Activated CD4-positive, alpha-beta T cell treated with anti-CD3 and anti-CD28 coated beads for 36 hours (primary cell): ENCODE measurements at regions of chr2 and their contacts with region 1.

Region 1: DNA sequence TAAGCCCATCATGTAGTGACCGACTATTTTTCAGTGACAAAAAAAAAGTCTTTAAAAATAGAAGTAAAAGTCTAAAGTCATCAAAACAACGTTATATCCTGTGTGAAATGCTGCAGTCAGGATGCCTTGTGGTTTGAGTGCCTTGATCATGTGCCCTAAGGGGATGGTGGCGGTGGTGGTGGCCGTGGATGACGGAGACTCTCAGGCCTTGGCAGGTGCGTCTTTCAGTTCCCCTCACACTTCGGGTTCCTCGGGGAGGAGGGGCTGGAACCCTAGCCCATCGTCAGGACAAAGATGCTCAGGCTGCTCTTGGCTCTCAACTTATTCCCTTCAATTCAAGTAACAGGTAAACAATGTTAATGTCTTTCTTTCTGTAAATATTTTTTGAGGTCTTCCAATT is at the start of gene CD28:
- DNase-seq: peak; percentile 95
- ATAC-seq: peak; percentile 75
- H3K4me3 Mint-ChIP-seq: peak within 1 kb of the TSS; percentile 84
- H3K27ac Mint-ChIP-seq: peak within 1 kb of the TSS; percentile 100
- H3K4me1 Mint-ChIP-seq: peaks cover 44% of the 10 kb centered on the region
- H3K27me3 Mint-ChIP-seq: no peaks in the 10 kb centered on the region
- total RNA-seq, gene CD28: 175 TPM

Region 2: GRCh38 chr2:203327901-203328759 is 378.3 kb before region 1 on chr2 and contains the start of gene ABI2:
- CTCF ChIA-PET with region 1: interaction called, 5 read pairs
- POLR2A ChIA-PET with region 1: no interaction called
- intact Hi-C with region 1: loop called in 1 of 2 experiments (anchors 5 kb)
- DNase-seq: peak; percentile 77
- ATAC-seq: peak; percentile 52
- H3K4me3 Mint-ChIP-seq: peak within 1 kb of the TSS; percentile 91
- H3K27ac Mint-ChIP-seq: peak within 1 kb of the TSS; percentile 84
- H3K4me1 Mint-ChIP-seq: peaks cover 31% of the 10 kb centered on the region
- H3K27me3 Mint-ChIP-seq: no peaks in the 10 kb centered on the region
- total RNA-seq, gene ABI2: 40.6 to 57.6 TPM

Region 3: GRCh38 chr2:203535078-203535783 is 171.2 kb before region 1 on chr2 and contains the start of gene RAPH1:
- CTCF ChIA-PET with region 1: no interaction called
- POLR2A ChIA-PET with region 1: interaction called, 6 read pairs
- intact Hi-C with region 1: loop called (anchors 1 to 2 kb)
- DNase-seq: peak; percentile 85
- ATAC-seq: peak; percentile 77
- H3K4me3 Mint-ChIP-seq: peak within 1 kb of the TSS; percentile 74
- H3K27ac Mint-ChIP-seq: peak within 1 kb of the TSS; percentile 56
- H3K4me1 Mint-ChIP-seq: peaks cover 30% of the 10 kb centered on the region
- H3K27me3 Mint-ChIP-seq: peaks cover 9% of the 10 kb centered on the region
- total RNA-seq, gene RAPH1: 8.5 to 9.9 TPM

Region 4: DNA sequence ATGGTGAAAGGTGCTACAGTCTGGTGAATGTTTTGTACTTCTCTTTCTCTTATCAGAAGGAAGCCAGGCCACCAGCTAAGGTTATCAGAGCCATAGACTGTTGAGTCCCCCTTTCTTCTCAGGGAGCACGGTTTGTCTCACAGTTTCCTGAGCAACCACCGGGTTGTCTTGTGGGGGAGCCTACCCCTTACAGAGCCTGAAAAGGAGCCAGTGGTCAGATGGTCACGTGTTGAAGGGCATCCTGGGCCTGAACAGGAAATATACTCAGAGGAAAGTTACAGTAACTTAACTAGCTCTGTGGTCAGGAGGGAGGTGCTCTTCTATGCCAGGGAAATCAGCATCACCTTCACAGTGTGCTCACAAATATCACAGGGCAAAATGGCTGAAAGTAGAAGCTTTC is 11.7 kb after region 1 on chr2:
- CTCF ChIA-PET with region 1: interaction called, 27 read pairs
- POLR2A ChIA-PET with region 1: interaction called, 46 read pairs
- intact Hi-C with region 1: loop called (anchors 1 kb)
- DNase-seq: peak; percentile 77
- ATAC-seq: peak; percentile 63
- H3K4me3 Mint-ChIP-seq: peak overlapping the region; percentile 63
- H3K27ac Mint-ChIP-seq: peak overlapping the region; percentile 95
- H3K4me1 Mint-ChIP-seq: peaks cover 97% of the 10 kb centered on the region
- H3K27me3 Mint-ChIP-seq: no peaks in the 10 kb centered on the region

Region 5: GRCh38 chr2:203759690-203760365 is 53.4 kb after region 1 on chr2:
- CTCF ChIA-PET with region 1: no interaction called
- POLR2A ChIA-PET with region 1: interaction called, 4 read pairs
- intact Hi-C with region 1: loop called (anchors 1 kb)
- DNase-seq: no peak
- ATAC-seq: no peak
- H3K4me3 Mint-ChIP-seq: no peak overlapping the region
- H3K27ac Mint-ChIP-seq: no peak overlapping the region
- H3K4me1 Mint-ChIP-seq: peaks cover 61% of the 10 kb centered on the region
- H3K27me3 Mint-ChIP-seq: no peaks in the 10 kb centered on the region

Region 6: DNA sequence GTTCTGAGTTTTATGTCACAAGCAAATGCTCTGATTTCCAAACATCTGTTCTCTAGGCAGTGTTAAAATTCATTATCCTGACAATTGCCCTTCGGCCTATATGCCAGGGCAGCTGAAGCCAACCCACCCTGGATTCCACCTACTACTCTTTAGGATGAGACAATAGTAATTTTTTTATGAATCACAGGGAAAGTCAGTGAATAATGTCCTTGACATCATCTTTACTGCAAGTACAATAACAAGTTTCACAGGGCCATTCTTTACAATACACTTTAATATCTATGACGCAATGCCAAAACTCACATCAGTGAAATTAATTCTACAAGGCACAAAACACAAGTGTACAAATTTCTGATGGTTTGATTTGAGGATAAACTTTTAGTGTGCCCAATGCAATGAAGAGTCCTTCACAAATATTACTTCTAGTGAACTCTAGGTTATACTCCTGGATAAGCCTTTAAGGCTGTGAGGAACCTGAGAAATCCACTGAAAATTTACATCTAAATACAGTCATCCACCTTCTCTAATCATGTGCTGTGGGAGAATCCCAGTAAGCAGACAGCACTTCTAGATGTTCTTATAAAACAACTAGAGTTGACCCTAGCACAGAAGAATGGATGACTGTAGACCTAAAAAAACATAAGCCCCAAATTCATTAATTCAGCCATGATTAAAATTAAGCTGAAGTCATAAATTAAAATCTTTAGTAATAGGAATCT is 83.9 kb after region 1 on chr2:
- CTCF ChIA-PET with region 1: no interaction called
- POLR2A ChIA-PET with region 1: no interaction called
- intact Hi-C with region 1: no loop called
- DNase-seq: no peak
- ATAC-seq: no peak
- H3K4me3 Mint-ChIP-seq: no peak overlapping the region
- H3K27ac Mint-ChIP-seq: no peak overlapping the region
- H3K4me1 Mint-ChIP-seq: peaks cover 13% of the 10 kb centered on the region
- H3K27me3 Mint-ChIP-seq: no peaks in the 10 kb centered on the region

Region 7: GRCh38 chr2:203804070-203804469 is 97.7 kb after region 1 on chr2:
- CTCF ChIA-PET with region 1: no interaction called
- POLR2A ChIA-PET with region 1: no interaction called
- intact Hi-C with region 1: loop called in 1 of 2 experiments (anchors 2 kb)
- DNase-seq: peak; percentile 63
- ATAC-seq: peak; percentile 30
- H3K4me3 Mint-ChIP-seq: peak overlapping the region; percentile 17
- H3K27ac Mint-ChIP-seq: peak overlapping the region; percentile 82
- H3K4me1 Mint-ChIP-seq: peaks cover 86% of the 10 kb centered on the region
- H3K27me3 Mint-ChIP-seq: no peaks in the 10 kb centered on the region

Region 8: DNA sequence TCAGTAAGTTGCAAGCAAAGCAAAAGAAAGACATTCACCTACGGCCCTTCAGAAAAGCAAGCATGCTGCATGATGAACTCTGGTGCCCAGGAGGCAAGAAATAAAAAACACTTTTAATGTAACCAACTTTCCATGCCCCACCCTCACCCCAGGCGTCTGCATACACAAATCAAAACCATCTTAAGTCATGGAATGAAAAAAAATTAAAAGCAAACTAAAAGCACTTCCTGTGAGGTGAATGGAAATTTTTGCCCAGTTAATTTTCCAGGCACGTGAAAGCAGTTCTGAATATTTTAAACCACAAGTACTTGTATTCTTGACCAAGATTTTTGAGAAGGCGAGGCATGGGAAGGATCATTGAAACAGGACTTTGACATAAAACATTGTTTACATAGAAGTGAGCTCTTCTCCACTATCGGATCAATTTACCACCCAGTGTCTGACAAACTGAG is 227.7 kb after region 1 on chr2:
- CTCF ChIA-PET with region 1: no interaction called
- POLR2A ChIA-PET with region 1: interaction called, 3 read pairs
- intact Hi-C with region 1: loop called (anchors 2 to 5 kb)
- DNase-seq: peak; percentile 78
- ATAC-seq: peak; percentile 47
- H3K4me3 Mint-ChIP-seq: peak overlapping the region; percentile 69
- H3K27ac Mint-ChIP-seq: peak overlapping the region; percentile 96
- H3K4me1 Mint-ChIP-seq: peaks cover 61% of the 10 kb centered on the region
- H3K27me3 Mint-ChIP-seq: no peaks in the 10 kb centered on the region